HCT116 (cell line): ENCODE measurements at regions of chr1 and their contacts with region 1.

Region 1: DNA sequence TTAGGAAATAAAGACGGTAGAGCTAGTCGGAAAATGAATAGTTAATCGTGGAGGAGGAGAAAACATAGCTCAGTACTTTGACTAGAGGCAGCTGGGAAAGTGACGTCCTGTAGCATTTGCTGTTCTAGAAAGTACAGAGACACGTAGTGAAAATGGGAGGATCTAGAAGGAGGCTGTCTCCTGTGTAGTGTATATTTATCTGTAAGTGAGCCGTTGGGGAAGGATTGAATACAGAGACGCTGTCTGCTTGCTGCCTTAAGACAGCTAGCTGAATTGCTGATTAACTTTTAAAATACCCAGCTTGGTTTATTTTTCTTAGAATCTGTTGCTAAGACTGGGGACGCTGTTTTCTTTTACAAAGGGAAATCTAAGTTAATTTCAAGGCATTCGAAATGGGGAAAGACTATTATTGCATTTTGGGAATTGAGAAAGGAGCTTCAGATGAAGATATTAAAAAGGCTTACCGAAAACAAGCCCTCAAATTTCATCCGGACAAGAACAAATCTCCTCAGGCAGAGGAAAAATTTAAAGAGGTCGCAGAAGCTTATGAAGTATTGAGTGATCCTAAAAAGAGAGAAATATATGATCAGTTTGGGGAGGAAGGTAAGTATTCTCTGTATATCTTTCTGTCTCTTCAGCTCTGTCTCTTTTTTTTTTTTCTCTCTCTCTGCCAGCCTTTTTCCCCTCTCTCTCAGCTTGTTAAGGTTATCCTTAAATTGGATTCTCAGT is at the start of gene DNAJB4:
- DNase-seq: peak; percentile 97
- ATAC-seq: peak; percentile 96
- H3K4me3 ChIP-seq: peak within 1 kb of the TSS; percentile 47 to 66
- H3K27ac ChIP-seq: peak within 1 kb of the TSS; percentile 71
- H3K4me1 ChIP-seq: peaks cover 24 to 49% of the 10 kb centered on the region in 2 experiments
- H3K27me3 ChIP-seq: no peaks in the 10 kb centered on the region
- CTCF ChIP-seq: no peak
- POLR2A ChIP-seq: no peak
- RAD21 ChIP-seq: no peak; the same call in 1 of the 2 replicates
- total RNA-seq, gene DNAJB4: 26.0 TPM

Region 2: DNA sequence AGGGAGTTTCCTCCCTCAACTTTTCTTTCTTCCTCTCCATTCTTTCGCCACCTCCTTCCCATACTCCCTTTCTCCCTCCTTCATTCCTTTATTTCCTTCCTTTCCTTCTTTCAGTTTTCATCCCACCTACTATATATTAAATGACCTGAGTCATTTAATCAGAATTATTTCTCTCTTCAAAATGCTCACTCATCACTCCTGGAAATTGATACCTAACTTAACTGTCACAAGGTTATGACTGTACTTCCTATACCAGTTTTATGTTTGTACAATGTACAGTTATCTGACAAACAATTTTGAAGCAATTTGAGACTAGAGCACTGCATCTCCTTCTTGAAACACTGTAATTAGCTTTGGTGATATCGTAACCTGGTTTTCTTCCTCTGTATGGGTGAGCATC is 75.1 kb before region 1 on chr1:
- CTCF ChIA-PET with region 1: no interaction called
- POLR2A ChIA-PET with region 1: no interaction called
- RAD21 ChIA-PET with region 1: no interaction called
- intact Hi-C with region 1: no loop called
- DNase-seq: no peak
- ATAC-seq: no peak
- H3K4me3 ChIP-seq: no peak overlapping the region
- H3K27ac ChIP-seq: no peak overlapping the region
- H3K4me1 ChIP-seq: no peaks in the 10 kb centered on the region
- H3K27me3 ChIP-seq: no peaks in the 10 kb centered on the region
- CTCF ChIP-seq: no peak
- POLR2A ChIP-seq: no peak
- RAD21 ChIP-seq: no peak

Region 3: DNA sequence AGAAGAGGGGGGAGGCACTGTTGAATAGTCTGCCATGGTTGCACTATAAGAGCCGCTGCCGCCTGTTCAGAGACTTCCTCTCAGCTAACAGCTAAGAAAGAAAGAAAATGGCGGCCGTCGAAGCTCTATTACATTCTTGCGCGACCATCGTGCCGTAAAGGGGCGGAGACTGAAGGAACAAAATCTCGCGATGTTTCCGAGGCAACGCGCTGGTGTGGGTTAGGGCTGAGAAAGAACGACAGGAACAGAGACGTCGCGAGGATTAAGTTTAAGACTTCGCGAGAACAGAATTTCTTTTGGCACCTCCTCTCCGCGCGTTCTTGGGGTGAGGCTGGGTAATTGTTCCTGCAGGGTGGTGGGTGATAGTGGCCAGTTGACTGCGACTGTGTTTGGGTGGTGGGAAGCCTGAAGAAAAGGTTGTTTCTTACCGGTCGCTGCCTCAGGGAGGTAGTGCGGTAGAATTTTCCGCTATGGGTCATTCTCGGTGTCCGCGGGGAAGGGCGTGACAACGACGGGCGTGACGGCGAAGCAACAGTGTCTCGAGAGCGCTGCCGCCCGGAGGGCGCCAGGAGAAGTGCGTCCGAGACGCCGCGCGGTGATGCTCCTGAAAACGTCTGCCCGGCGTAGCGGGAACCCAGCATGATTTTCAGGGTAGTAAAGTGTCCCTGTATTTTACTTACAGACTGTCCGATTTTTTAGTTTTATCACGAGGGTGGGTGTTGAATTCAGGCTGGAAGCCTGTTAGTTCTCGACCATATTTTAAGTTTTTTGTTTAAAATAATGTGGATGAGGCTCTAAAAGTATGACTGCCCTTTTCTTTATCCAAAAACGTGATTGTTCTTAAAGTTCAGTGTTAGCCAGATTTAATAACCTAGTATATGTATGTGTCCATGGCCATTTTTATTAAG is 25.7 kb before region 1 on chr1 and contains the start of gene FUBP1:
- CTCF ChIA-PET with region 1: interaction called, 4 read pairs
- POLR2A ChIA-PET with region 1: interaction called, 129 read pairs
- RAD21 ChIA-PET with region 1: no interaction called
- intact Hi-C with region 1: loop called (anchors 1 kb)
- DNase-seq: peak; percentile 99
- ATAC-seq: peak; percentile 89
- H3K4me3 ChIP-seq: peak within 1 kb of the TSS; percentile 99
- H3K27ac ChIP-seq: peak within 1 kb of the TSS; percentile 80
- H3K4me1 ChIP-seq: peaks cover 12 to 20% of the 10 kb centered on the region in 2 experiments
- H3K27me3 ChIP-seq: no peaks in the 10 kb centered on the region
- CTCF ChIP-seq: peak; percentile 48 to 56 (median 50); a peak in 5 of 6 replicates
- POLR2A ChIP-seq: peak; percentile 91
- RAD21 ChIP-seq: peak; percentile 47; the same call in 1 of the 2 replicates
- total RNA-seq, gene FUBP1: 125 TPM

Region 4: DNA sequence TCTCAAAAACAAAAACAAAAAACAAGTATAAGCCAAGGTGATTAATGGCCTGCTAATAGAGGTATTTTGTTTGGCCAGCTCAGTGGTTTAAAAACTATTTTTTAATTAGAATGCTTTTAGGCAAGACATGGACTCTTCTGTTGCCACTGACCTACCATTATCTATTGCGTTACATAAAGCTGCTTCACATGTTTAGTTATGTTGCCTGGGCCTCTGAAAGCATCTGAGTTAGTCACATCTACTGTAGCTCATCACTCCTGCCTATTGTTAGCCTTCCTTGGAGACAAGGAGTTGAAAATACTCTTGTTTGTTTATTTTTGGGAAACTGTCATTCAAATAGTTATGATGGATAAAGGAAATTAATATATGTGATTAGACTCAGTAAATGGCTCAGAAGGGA is 14.1 kb after region 1 on chr1:
- CTCF ChIA-PET with region 1: no interaction called
- POLR2A ChIA-PET with region 1: interaction called, 21 read pairs
- RAD21 ChIA-PET with region 1: no interaction called
- intact Hi-C with region 1: no loop called
- DNase-seq: no peak
- ATAC-seq: no peak
- H3K4me3 ChIP-seq: no peak overlapping the region
- H3K27ac ChIP-seq: no peak overlapping the region
- H3K4me1 ChIP-seq: no peaks in the 10 kb centered on the region
- H3K27me3 ChIP-seq: no peaks in the 10 kb centered on the region
- CTCF ChIP-seq: no peak
- POLR2A ChIP-seq: no peak
- RAD21 ChIP-seq: no peak

Region 5: GRCh38 chr1:78060857-78061563 is 56.1 kb after region 1 on chr1:
- CTCF ChIA-PET with region 1: no interaction called
- POLR2A ChIA-PET with region 1: interaction called, 14 read pairs
- RAD21 ChIA-PET with region 1: no interaction called
- intact Hi-C with region 1: no loop called
- DNase-seq: no peak
- ATAC-seq: peak; percentile 84
- H3K4me3 ChIP-seq: no peak overlapping the region
- H3K27ac ChIP-seq: no peak overlapping the region
- H3K4me1 ChIP-seq: no peaks in the 10 kb centered on the region
- H3K27me3 ChIP-seq: no peaks in the 10 kb centered on the region
- CTCF ChIP-seq: peak in 2 of 3 experiments; percentile 34 to 49; a peak in 4 of 6 replicates
- POLR2A ChIP-seq: no peak
- RAD21 ChIP-seq: no peak

Region 6: GRCh38 chr1:78114034-78114956 is 109.4 kb after region 1 on chr1:
- CTCF ChIA-PET with region 1: interaction called, 29 read pairs
- POLR2A ChIA-PET with region 1: interaction called, 44 read pairs
- RAD21 ChIA-PET with region 1: interaction called in 1 of 2 experiments, 5 read pairs
- intact Hi-C with region 1: no loop called
- DNase-seq: peak; percentile 73
- ATAC-seq: peak; percentile 86
- H3K4me3 ChIP-seq: no peak overlapping the region
- H3K27ac ChIP-seq: no peak overlapping the region
- H3K4me1 ChIP-seq: peaks cover 0 to 16% of the 10 kb centered on the region in 2 experiments; a peak in 2 of 4 replicates
- H3K27me3 ChIP-seq: no peaks in the 10 kb centered on the region
- CTCF ChIP-seq: peak; percentile 74 to 100 (median 92)
- POLR2A ChIP-seq: no peak
- RAD21 ChIP-seq: peak; percentile 99